ENCODE measurements at regions of chr12 and their contacts with region 1.

Region 1: DNA sequence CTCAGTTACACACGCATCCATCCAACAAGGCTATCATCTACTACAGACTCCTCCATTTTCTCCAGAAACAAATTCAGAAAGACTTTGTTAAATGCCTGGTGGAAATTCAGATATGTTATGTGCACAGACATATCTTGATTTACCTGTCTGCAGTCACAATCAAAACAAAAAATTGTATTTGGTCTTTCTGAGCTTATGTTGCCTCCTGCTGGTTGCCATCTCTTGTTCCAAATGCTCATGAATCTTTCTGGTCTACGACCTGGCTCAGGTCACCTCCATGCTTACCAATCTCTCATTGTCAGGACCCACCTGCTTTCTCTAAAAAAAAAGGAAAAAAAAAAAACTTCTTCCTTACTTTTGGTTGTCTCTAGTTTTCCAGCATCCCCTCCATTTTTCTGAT is 169.2 kb upstream of the PLXNC1 start:
- DNase-seq: peak; percentile 65
- ATAC-seq: peak; percentile 42; the same call in 1 of the 2 replicates
- H3K4me3 ChIP-seq: no peak overlapping the region
- H3K27ac ChIP-seq: no peak overlapping the region
- H3K4me1 ChIP-seq: peaks cover 5% of the 10 kb centered on the region
- H3K27me3 ChIP-seq: no peaks in the 10 kb centered on the region
- CTCF ChIP-seq: peak; percentile 74

Region 2: DNA sequence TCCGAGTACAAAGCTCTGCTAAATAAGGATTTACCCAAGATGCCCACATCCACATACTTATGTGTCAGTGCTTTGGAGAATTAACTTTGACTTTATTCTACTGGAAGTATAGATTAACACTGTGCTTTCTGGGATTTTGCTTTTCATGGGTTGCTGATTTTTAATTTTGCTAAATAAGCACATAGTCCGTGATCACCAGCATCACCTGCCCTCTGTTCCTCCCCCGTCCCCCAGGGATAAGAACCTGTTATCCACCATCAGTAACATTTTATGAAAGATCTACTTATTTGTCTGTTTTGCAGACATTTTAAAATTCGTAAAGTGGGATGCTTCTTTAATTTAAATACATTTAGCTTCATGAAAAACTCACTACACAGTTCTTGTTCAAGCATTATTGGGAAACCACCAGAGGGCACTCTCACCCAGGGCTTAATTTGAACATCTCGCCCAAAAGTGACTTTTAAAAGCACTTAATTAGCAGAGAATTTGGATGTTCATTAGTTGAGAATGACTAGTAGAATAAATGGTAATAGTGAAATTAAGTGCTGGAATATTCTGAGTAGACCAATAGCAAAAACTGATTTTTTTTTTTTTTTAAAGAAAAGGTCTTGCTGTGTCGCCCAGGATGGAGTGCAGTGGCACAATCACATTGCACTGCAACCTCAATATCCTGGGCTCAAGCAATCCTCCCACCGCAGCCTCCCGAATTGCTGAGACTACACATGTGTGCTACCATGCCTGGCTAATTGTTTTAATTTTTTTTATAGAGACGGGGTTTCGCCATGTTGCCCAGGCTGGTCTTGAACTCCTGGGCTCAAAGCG is 476.2 kb before region 1 on chr12:
- CTCF ChIA-PET with region 1: no interaction called
- POLR2A ChIA-PET with region 1: no interaction called
- intact Hi-C with region 1: loop called (anchors 10 kb)
- DNase-seq: peak; percentile 65
- ATAC-seq: peak; percentile 33; the same call in 1 of the 2 replicates
- H3K4me3 ChIP-seq: no peak overlapping the region
- H3K27ac ChIP-seq: no peak overlapping the region
- H3K4me1 ChIP-seq: no peaks in the 10 kb centered on the region
- H3K27me3 ChIP-seq: no peaks in the 10 kb centered on the region
- CTCF ChIP-seq: peak; percentile 92

Region 3: DNA sequence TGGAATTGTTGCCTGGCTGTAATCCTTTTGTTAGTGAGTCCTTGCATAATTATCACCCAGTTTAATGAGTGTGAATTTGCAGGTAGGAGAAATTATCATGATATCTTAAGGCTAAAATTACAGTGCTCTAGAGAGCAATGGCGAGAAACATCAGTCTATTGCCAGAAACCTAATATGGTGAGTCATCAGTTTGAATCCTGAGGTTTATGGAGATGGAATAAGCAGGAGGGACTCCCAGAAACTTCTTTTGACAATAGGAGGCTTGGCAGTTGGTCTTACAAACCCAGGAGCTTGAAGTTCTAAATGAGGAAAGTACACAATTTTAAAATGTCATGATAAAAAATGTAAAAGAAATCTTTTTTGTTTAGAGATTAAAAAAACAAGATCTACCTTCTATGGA is 333.5 kb before region 1 on chr12:
- CTCF ChIA-PET with region 1: no interaction called
- POLR2A ChIA-PET with region 1: interaction called, 22 read pairs
- intact Hi-C with region 1: no loop called
- DNase-seq: peak; percentile 58
- ATAC-seq: peak; percentile 79
- H3K4me3 ChIP-seq: no peak overlapping the region
- H3K27ac ChIP-seq: no peak overlapping the region
- H3K4me1 ChIP-seq: no peaks in the 10 kb centered on the region
- H3K27me3 ChIP-seq: no peaks in the 10 kb centered on the region
- CTCF ChIP-seq: no peak

Region 4: GRCh38 chr12:93682846-93683261 is 296.3 kb before region 1 on chr12:
- CTCF ChIA-PET with region 1: no interaction called
- POLR2A ChIA-PET with region 1: no interaction called
- intact Hi-C with region 1: no loop called
- DNase-seq: no peak
- ATAC-seq: no peak
- H3K4me3 ChIP-seq: no peak overlapping the region
- H3K27ac ChIP-seq: no peak overlapping the region
- H3K4me1 ChIP-seq: peaks cover 7% of the 10 kb centered on the region
- H3K27me3 ChIP-seq: no peaks in the 10 kb centered on the region
- CTCF ChIP-seq: no peak

Measured in PC-3 (cell line).